Activated B cell treated with CpG ODN at 0.5 μM for 24 hours (primary cell): ENCODE measurements at regions of chr11 and their contacts with region 1.

Region 1: DNA sequence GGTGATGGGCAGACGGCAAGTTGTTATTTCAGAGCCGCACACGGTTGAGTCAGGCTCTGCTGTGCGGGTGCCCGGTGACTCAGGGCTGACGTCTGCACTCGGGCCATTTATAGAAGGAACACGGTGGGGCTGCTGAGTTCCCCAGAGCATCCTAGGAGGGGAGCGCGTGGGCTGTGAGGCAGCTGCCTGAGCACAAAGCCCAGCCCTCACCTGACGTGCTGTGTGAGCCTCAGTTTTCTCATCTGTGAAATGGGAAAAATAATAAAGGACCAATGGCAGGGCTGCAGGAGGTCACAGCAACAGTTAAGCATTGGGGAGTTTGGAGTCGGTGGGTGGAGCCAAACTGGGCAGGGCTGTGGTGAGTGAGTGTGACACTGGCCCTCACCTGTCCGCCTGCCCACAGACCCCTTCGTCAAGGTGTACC is 11.3 kb upstream of the RHOD start:
- DNase-seq: no peak
- ATAC-seq: peak; percentile 65
- H3K4me3 Mint-ChIP-seq: no peak overlapping the region
- H3K27ac Mint-ChIP-seq: peak overlapping the region; percentile 18
- H3K4me1 Mint-ChIP-seq: peaks cover 17% of the 10 kb centered on the region
- H3K27me3 Mint-ChIP-seq: peaks cover 37% of the 10 kb centered on the region
- CTCF ChIP-seq: no peak

Region 2: DNA sequence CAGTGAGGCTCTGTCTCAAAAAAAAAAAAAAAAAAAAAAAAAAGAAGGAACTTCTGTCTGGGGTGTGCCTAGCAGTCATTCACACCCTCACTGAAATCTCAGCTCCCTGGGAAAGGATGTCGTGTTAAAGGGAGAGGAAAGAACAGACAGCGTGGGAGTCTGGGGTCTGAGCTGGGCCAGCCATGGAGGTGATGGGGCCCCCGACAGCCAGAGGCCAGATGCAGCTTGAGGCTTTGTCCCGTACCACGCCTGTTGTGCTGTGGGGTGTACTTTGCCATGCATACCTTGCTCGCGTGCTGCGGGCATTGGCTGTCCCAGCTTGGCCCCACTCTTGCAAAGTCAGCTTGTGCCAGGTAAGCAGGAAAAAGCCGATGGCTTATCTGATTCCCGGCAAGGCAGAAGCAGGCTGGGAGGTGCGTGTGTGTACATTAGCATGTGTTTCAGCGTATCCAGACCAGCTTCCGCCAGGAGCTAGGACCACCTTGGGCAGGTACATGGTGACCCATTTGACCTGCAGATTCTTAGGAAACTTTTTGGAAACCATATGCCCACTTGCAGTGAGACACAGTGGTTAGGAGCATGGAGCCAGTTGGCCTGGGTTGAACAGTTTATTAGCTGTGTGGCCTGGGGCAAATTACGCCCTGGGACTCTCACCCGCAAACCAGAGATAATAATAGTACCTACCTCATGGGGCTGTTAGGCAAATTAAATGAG is 17.7 kb before region 1 on chr11:
- CTCF ChIA-PET with region 1: no interaction called
- POLR2A ChIA-PET with region 1: no interaction called
- intact Hi-C with region 1: loop called (anchors 2 kb)
- DNase-seq: no peak
- ATAC-seq: peak; percentile 82
- H3K4me3 Mint-ChIP-seq: peak overlapping the region; percentile 11
- H3K27ac Mint-ChIP-seq: no peak overlapping the region
- H3K4me1 Mint-ChIP-seq: peaks cover 54% of the 10 kb centered on the region
- H3K27me3 Mint-ChIP-seq: peaks cover 45% of the 10 kb centered on the region
- CTCF ChIP-seq: no peak